ENCODE measurements at regions of chr12 and their contacts with region 1.

Region 1: GRCh38 chr12:93894391-93895088 is 217.4 kb downstream of the CRADD start:
- DNase-seq: peak; percentile 94
- ATAC-seq: peak; percentile 95

Region 2: GRCh38 chr12:93778306-93778705 is 116.2 kb before region 1 on chr12:
- intact Hi-C with region 1: loop called (anchors 10 kb)
- DNase-seq: no peak
- ATAC-seq: peak; percentile 90

Region 3: DNA sequence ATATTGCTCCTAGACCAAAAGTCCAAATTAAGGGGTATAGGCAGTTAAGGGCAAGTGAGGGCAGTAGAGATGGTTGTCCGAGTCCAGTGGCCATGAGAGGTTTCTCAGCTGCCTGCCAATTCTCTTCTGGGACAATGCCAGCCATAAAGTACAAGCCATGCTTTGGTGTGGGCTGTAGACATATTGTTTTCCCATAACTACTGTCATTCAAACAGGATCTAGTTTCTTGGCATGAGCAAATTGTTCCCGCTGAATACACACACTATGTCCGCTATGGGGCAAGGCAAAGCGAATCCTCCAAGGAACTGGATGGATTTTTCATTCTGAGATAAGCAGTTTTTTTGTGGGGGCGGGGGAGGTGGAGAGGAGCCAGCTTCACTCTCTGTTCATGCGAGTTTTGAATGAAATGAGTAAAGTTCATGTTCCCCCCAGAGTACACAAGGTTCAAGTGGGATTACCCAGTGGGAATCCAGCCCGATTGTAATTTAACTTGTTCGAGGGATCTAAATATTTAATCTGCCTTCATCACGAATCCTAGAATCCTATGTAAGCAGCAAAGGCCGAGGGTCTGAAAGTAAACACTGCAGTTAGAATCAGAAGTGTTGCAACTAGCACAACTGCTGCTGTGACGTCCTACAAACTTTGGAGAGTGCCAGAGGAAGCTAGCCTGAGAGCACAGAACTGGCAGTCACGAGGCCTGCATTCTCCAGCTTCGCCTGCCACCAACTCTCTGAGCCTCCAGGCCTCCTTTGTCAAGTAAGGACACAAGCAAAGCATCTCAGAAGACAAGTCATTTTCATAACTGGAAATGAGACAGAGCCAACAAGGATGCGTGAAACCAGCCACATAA is 80.3 kb before region 1 on chr12:
- intact Hi-C with region 1: loop called (anchors 1 kb)
- DNase-seq: peak; percentile 86
- ATAC-seq: peak; percentile 92

Region 4: DNA sequence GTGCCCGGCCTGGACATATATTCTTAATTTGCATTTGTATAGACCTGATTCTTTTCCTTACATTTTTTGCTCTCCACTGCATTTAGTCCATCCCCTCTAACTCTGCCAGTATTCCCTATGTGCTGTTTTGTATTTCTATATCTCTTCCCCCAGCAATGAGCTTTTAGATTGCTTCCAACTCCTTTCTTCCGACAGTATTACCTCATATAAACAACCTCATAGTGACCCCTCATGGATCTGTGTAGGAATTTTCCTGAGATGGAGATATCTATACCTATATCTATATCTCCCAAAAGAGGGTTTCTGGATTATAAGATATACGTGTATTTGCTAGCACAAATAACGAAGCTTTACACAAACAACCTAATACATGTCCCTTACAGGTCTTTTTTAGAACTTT is 55.5 kb before region 1 on chr12:
- intact Hi-C with region 1: loop called (anchors 5 kb)
- DNase-seq: no peak
- ATAC-seq: no peak

Region 5: GRCh38 chr12:93979189-93979588 is 84.6 kb after region 1 on chr12:
- intact Hi-C with region 1: loop called (anchors 5 kb)
- DNase-seq: no peak
- ATAC-seq: no peak

Region 6: DNA sequence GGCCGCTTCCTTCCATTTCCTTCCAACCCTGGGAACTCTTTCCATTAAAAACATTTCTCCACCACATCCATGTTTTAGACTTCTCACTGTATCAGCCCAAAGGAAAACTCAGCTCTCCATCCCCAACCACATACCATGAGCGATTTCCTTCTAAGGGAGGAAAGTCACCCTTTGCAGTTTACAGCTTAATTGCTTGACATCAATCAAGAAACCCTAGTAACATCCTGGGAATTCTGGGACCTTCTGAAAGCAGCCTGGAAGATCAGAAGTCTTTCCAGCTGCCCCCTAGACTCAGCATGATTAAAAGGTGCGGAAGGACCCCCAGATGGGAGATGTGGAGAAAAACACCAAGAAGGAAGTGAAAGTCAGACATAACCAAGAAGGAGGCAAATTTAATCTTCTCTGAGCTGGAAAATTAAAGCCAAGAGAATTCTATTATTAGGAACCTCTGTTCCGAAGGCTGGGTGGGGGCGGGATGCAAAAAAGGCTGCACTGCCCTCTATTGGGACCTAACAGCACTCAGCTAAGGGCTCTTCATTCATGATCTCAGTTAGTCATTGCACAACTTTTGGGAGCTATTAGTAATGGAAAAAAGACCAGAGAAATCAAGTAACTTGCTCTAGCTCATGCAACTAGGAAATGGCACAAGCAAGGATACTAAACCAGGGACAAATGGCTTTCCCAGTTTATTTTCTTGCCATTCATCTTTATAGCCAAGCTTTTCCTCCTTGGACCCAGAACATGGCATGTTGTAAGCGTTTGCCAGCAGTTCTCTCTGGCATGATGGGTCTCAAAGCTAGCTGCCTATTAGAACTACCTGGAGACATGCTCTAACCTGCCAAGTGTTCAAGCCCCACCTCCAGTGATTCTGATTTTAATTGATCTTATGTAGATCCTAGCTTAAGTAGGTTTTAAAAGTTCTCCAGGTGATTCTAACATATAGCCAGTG is 180.7 kb after region 1 on chr12:
- intact Hi-C with region 1: loop called (anchors 2 kb)
- DNase-seq: peak; percentile 81
- ATAC-seq: peak; percentile 92

Measured in Right ventricle myocardium inferior (tissue), 1 donor.